CD8-positive, alpha-beta T cell (primary cell): ENCODE measurements at regions of chr12 and their contacts with region 1.

Region 1: DNA sequence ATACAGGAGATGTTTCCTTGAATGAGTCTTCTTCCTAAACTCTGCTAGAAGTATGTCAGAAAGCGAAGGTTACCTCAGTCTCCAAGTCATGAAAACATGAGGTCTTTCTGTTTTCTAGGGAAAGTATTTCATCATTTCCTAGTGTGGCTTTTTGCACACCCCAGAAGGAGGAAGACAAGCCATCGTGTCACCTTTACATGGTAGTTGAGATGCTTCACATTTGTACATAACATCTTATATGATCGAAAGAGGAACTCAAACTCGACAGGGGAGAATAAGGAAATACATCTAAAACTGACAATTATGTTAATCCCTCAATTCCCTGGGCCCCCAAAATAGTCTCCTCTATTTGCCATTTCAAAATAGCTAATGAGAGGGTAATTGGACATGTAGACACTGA is 214.1 kb upstream of the PLEKHG7 start:
- DNase-seq: no peak
- ATAC-seq: no peak
- H3K4me3 ChIP-seq: no peak overlapping the region
- H3K4me3 Mint-ChIP-seq: no peak overlapping the region
- H3K27ac ChIP-seq: no peak overlapping the region
- H3K27ac Mint-ChIP-seq: no peak overlapping the region
- H3K4me1 ChIP-seq: no peaks in the 10 kb centered on the region
- H3K4me1 Mint-ChIP-seq: peaks cover 13% of the 10 kb centered on the region
- H3K27me3 ChIP-seq: no peaks in the 10 kb centered on the region
- H3K27me3 Mint-ChIP-seq: no peaks in the 10 kb centered on the region
- CTCF ChIP-seq: no peak

Region 2: DNA sequence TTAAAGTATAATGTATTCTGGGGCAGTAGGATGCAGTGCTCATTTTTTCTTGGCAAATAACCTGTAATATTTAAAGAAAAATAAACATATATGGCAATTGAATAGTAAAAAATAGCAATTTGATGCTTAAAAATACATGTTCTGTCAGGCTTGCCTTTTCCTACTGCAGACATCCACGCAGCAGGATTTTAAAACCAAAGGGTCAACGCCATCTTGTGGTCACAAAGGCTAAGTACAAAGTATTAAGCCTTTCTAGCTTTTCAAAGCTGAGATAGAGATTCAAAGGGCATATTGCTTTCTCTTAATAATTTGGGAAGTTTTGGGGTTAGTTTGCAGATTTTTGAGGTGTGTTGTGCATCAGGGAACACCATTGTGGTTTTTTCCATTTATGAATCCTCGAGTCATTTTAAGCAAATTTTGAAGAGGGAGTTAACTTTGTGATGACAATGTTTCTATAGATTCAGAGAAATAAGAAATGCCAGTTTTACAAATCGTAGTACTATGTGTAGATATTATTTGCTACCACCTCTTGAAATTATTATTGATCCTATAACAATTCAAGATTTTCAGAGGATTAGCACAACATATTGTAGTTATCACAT is 1529.1 kb before region 1 on chr12:
- CTCF ChIA-PET with region 1: no interaction called
- POLR2A ChIA-PET with region 1: no interaction called
- intact Hi-C with region 1: no loop called
- DNase-seq: peak in 3 of 9 experiments; percentile 9 to 49 (median 37)
- ATAC-seq: no peak
- H3K4me3 ChIP-seq: no peak overlapping the region
- H3K4me3 Mint-ChIP-seq: no peak overlapping the region
- H3K27ac ChIP-seq: no peak overlapping the region
- H3K27ac Mint-ChIP-seq: no peak overlapping the region
- H3K4me1 ChIP-seq: no peaks in the 10 kb centered on the region
- H3K4me1 Mint-ChIP-seq: no peaks in the 10 kb centered on the region
- H3K27me3 ChIP-seq: no peaks in the 10 kb centered on the region
- H3K27me3 Mint-ChIP-seq: peaks cover 2% of the 10 kb centered on the region
- CTCF ChIP-seq: peak; percentile 70

Region 3: DNA sequence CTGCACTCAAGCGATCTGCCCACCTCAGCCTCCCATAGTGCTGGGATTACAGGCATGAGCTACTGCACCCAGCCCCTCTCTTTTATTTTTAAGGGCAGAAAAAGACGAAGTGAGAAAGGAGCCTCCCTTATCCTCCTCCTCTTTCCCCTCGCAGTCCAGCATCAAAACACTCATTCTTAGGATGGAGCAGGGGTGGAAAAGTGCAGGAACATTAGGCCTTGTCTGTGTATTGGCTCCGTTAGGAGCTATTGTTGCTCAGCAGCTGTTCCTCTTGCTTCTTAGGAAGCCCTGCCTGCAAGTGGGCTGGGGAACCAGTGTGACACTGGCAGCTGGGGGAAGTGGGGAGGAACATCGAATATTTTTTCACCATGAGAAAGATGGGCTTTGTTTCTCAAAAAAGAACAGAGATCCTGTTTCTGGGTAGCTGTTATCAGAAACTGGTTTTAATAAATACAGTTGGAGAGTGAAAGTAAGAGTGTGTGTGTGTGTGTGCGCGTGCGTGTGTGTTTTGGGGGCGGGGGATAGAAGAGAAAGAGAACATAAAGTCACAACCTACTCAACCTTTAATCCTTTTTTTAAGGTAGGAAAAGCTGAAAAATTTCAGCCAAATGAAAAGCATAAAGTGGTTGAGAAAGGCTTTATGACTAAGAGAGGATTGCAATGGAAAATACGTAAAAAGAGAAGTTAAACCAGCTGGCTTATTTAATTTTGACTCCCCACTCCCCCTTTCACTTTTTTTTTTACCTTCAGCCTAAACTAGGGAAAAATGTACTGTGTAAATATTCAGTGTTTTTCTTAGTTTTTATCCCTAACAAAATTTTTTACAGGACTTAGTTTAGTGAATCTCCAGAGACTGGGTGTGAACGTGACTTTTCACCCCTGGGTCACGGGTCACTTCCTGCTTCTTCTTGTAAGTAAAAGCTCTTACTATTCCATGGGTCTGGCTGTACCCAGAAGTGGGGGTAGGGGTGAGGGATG is 16.8 kb after region 1 on chr12:
- CTCF ChIA-PET with region 1: interaction called, 3 read pairs
- POLR2A ChIA-PET with region 1: interaction called, 10 read pairs
- intact Hi-C with region 1: no loop called
- DNase-seq: peak in 8 of 9 experiments; percentile 11 to 67 (median 40)
- ATAC-seq: peak; percentile 80
- H3K4me3 ChIP-seq: peak overlapping the region; percentile 27 to 28
- H3K4me3 Mint-ChIP-seq: peak overlapping the region; percentile 80
- H3K27ac ChIP-seq: peak overlapping the region; percentile 48 to 75
- H3K27ac Mint-ChIP-seq: peak overlapping the region; percentile 96
- H3K4me1 ChIP-seq: peaks cover 9% of the 10 kb centered on the region
- H3K4me1 Mint-ChIP-seq: peaks cover 22% of the 10 kb centered on the region
- H3K27me3 ChIP-seq: no peaks in the 10 kb centered on the region
- H3K27me3 Mint-ChIP-seq: no peaks in the 10 kb centered on the region
- CTCF ChIP-seq: no peak